PC-3 (cell line): ENCODE measurements at regions of chr1 and their contacts with region 1.

Region 1: GRCh38 chr1:244918421-244919319 is 54.3 kb upstream of the HNRNPU start:
- DNase-seq: peak; percentile 57
- ATAC-seq: peak; percentile 76
- H3K4me3 ChIP-seq: peak overlapping the region; percentile 73
- H3K27ac ChIP-seq: no peak overlapping the region
- H3K4me1 ChIP-seq: peaks cover 5% of the 10 kb centered on the region; the same call in 1 of the 2 replicates
- H3K27me3 ChIP-seq: no peaks in the 10 kb centered on the region
- CTCF ChIP-seq: no peak; the same call in 1 of the 2 replicates

Region 2: GRCh38 chr1:244964112-244964971 is 45.7 kb after region 1 on chr1:
- CTCF ChIA-PET with region 1: no interaction called
- POLR2A ChIA-PET with region 1: no interaction called
- intact Hi-C with region 1: loop called (anchors 2 kb)
- DNase-seq: peak; percentile 90
- ATAC-seq: peak; percentile 88
- H3K4me3 ChIP-seq: peak overlapping the region; percentile 51
- H3K27ac ChIP-seq: peak overlapping the region; percentile 85
- H3K4me1 ChIP-seq: peaks cover 39% of the 10 kb centered on the region
- H3K27me3 ChIP-seq: no peaks in the 10 kb centered on the region
- CTCF ChIP-seq: no peak